HepG2 (cell line): ENCODE measurements at regions of chr9 and their contacts with region 1.

Region 1: DNA sequence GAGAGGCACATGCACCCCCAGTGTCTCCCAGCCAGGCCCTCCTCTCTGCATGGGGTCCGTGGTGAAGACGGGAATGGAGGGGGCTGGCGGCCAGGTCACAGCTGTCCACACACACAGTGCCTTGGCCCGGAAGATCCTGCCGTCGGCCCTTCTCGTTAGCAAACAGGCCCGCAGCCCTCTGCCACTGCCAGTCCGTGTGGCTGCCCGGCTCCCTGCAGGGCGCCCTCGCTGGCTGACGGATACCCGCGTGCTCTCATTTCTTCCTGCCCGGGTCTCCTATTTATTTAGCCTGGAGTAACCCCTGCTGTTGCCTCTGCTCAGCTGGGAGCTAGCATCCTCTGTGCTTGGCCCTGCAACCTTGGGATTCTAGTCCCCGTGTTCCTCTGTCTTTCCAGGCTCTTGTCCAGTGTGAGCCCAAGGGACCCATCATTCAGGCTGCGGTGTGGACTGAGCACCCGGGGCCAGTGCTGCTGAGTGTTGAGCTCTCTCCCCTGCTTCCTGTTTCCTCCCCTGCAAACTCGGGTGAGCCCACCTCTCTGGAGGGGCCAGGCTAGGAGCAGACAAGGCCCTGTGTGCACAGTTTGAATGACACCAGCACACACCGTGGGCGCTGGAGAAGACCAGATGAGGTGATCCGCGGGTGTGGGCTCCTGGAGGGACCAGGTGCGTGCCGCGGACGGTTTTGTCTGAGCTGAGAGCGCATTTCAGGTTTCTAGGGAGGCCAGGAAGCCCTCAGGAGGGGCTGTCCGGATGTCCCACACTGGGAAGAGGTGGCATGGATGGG is 14.6 kb upstream of the RNU6ATAC start:
- DNase-seq: no peak
- ATAC-seq: peak; percentile 15
- H3K4me3 ChIP-seq: peak overlapping the region in 1 of 3 experiments; percentile 23; a peak in 1 of 6 replicates
- H3K27ac ChIP-seq: no peak overlapping the region
- H3K4me1 ChIP-seq: peaks cover 48% of the 10 kb centered on the region
- H3K27me3 ChIP-seq: peaks cover 10 to 66% of the 10 kb centered on the region in 2 experiments
- CTCF ChIP-seq: peak; percentile 14; the same call in 1 of the 2 replicates
- EP300 ChIP-seq: no peak
- POLR2A ChIP-seq: no peak
- RAD21 ChIP-seq: no peak

Region 2: DNA sequence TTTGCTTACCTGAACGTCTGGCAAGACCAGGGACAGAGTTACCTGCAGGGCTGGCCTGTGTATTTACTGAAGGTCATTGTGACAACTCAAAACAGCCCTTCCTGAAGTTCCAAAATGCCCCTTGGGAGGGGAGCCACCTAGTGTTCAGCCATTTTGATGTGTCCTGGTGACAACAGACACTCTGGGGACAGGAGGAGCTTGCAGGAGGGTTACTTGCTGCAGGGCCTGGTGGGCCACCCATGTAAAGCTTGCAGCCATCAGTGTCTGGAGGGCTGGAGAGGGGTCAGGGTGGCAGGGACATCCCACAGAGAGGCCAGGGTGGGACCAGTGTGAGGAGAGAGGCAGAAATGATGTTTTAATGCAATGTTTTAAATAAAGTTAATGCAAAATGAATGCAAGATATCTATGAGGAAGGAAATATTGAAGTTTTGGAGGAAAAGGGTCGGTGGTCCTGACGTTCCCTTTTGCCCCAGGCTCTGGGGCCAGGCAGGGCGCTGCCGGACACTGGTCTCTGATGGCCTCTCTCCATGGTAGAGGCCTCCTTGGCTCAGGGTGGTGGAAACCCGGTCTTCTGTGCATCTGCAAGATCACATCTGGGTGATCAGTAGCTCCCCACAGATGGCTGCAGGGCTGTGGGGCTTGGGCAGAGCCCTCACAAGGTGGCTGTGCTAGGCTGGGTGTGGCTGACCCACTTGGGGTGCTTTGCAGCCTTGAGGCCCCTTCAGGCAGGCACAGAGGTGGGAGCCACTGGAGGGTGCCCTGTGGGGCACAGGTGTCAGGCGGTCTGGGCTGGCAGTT is 39.1 kb after region 1 on chr9:
- CTCF ChIA-PET with region 1: interaction called, 3 read pairs
- POLR2A ChIA-PET with region 1: no interaction called
- in situ Hi-C with region 1: loop called (anchors 5 kb)
- intact Hi-C with region 1: loop called (anchors 5 kb)
- DNase-seq: peak; percentile 70
- ATAC-seq: peak; percentile 47
- H3K4me3 ChIP-seq: no peak overlapping the region
- H3K27ac ChIP-seq: no peak overlapping the region
- H3K4me1 ChIP-seq: peaks cover 75% of the 10 kb centered on the region
- H3K27me3 ChIP-seq: peaks cover 9 to 21% of the 10 kb centered on the region in 2 experiments; a peak in 3 of 5 replicates
- CTCF ChIP-seq: peak; percentile 75
- EP300 ChIP-seq: no peak
- POLR2A ChIP-seq: no peak
- RAD21 ChIP-seq: peak; percentile 47

Region 3: GRCh38 chr9:134267881-134268724 is 89.1 kb after region 1 on chr9:
- CTCF ChIA-PET with region 1: no interaction called
- POLR2A ChIA-PET with region 1: no interaction called
- in situ Hi-C with region 1: no loop called
- intact Hi-C with region 1: loop called (anchors 10 kb)
- DNase-seq: peak; percentile 23
- ATAC-seq: peak; percentile 56
- H3K4me3 ChIP-seq: peak overlapping the region in 1 of 3 experiments; percentile 26; a peak in 1 of 6 replicates
- H3K27ac ChIP-seq: no peak overlapping the region
- H3K4me1 ChIP-seq: peaks cover 62% of the 10 kb centered on the region
- H3K27me3 ChIP-seq: peaks cover 19 to 59% of the 10 kb centered on the region in 2 experiments
- CTCF ChIP-seq: no peak; the same call in 1 of the 2 replicates
- EP300 ChIP-seq: no peak
- POLR2A ChIP-seq: no peak
- RAD21 ChIP-seq: no peak